Heart left ventricle (tissue), 16 donors: ENCODE measurements at regions of chr12 and their contacts with region 1.

Region 1: GRCh38 chr12:104303538-104304151 is at the start of gene EID3:
- DNase-seq: peak; percentile 91 to 96 (median 93)
- ATAC-seq: peak; percentile 93 to 100 (median 100)
- H3K4me3 ChIP-seq: peak within 1 kb of the TSS; percentile 12 to 75 (median 55)
- H3K27ac ChIP-seq: peak within 1 kb of the TSS; percentile 37 to 82 (median 64)
- H3K4me1 ChIP-seq: peaks cover 0 to 79% (median 40%) of the 10 kb centered on the region in 12 donors
- H3K27me3 ChIP-seq: no peaks in the 10 kb centered on the region
- CTCF ChIP-seq: no peak
- POLR2A ChIP-seq: no peak
- total RNA-seq, gene EID3: 0.44 to 4.0 (median 1.3) TPM

Region 2: GRCh38 chr12:104286538-104287482 is 16.8 kb before region 1 on chr12:
- intact Hi-C with region 1: loop called in 1 of 10 experiments (anchors 2 kb)
- DNase-seq: peak; percentile 92 to 95 (median 94)
- ATAC-seq: peak; percentile 91 to 94 (median 93)
- H3K4me3 ChIP-seq: peak overlapping the region; percentile 53 to 92 (median 74)
- H3K27ac ChIP-seq: peak overlapping the region; percentile 75 to 97 (median 94)
- H3K4me1 ChIP-seq: peaks cover 0 to 38% (median 28%) of the 10 kb centered on the region in 12 donors
- H3K27me3 ChIP-seq: no peaks in the 10 kb centered on the region
- CTCF ChIP-seq: peak in 1 of 12 donors; percentile 9
- POLR2A ChIP-seq: peak in 1 of 2 donors; percentile 88

Region 3: DNA sequence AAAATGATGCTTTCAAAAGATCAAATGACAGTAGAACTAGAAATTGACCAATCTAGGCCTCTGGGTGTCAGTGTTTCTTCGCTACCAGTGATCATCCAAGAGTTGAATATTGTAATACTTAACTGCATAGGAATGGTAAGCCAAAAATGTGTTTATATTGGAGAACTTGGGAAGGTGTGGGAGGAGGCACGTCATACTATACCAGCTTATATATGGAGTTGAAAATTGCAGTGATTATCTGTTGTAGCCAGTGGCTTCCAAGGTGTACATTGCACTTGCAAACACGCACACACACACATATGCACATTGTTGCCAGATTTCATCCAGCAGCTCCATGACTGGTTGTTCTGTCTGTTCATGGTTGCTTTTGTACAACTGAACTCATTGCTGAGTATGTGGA is 36.0 kb after region 1 on chr12:
- intact Hi-C with region 1: loop called in 1 of 10 experiments (anchors 5 kb)
- DNase-seq: no peak
- ATAC-seq: no peak
- H3K4me3 ChIP-seq: no peak overlapping the region
- H3K27ac ChIP-seq: no peak overlapping the region
- H3K4me1 ChIP-seq: peaks cover 0 to 24% (median 5%) of the 10 kb centered on the region in 12 donors
- H3K27me3 ChIP-seq: no peaks in the 10 kb centered on the region
- CTCF ChIP-seq: no peak
- POLR2A ChIP-seq: no peak

Region 4: GRCh38 chr12:104352106-104352713 is 48.6 kb after region 1 on chr12:
- intact Hi-C with region 1: loop called in 1 of 10 experiments (anchors 5 kb)
- DNase-seq: no peak
- ATAC-seq: peak in 1 of 4 donors; percentile 29
- H3K4me3 ChIP-seq: no peak overlapping the region
- H3K27ac ChIP-seq: no peak overlapping the region
- H3K4me1 ChIP-seq: peaks cover 0 to 3% (median 0%) of the 10 kb centered on the region in 12 donors
- H3K27me3 ChIP-seq: no peaks in the 10 kb centered on the region
- CTCF ChIP-seq: no peak
- POLR2A ChIP-seq: no peak